ENCODE measurements at regions of chr2 and their contacts with region 1.

Region 1: GRCh38 chr2:63861220-63861822 is 19.6 kb downstream of the UGP2 start:
- DNase-seq: peak in 1 of 2 donors; percentile 86
- ATAC-seq: peak; percentile 54 to 76 (median 74)
- H3K4me3 ChIP-seq: no peak overlapping the region
- H3K4me3 Mint-ChIP-seq: no peak overlapping the region
- H3K27ac ChIP-seq: no peak overlapping the region
- H3K27ac Mint-ChIP-seq: peak overlapping the region; percentile 32 to 68
- H3K4me1 ChIP-seq: peaks cover 10% of the 10 kb centered on the region
- H3K4me1 Mint-ChIP-seq: peaks cover 16 to 27% of the 10 kb centered on the region in 2 donors
- H3K27me3 ChIP-seq: no peaks in the 10 kb centered on the region
- H3K27me3 Mint-ChIP-seq: no peaks in the 10 kb centered on the region
- CTCF ChIP-seq: peak; percentile 52

Region 2: GRCh38 chr2:63692002-63692606 is 169.2 kb before region 1 on chr2:
- intact Hi-C with region 1: loop called (anchors 1 kb)
- DNase-seq: peak in 1 of 2 donors; percentile 70
- ATAC-seq: peak; percentile 44 to 66 (median 63)
- H3K4me3 ChIP-seq: no peak overlapping the region
- H3K4me3 Mint-ChIP-seq: no peak overlapping the region
- H3K27ac ChIP-seq: no peak overlapping the region
- H3K27ac Mint-ChIP-seq: no peak overlapping the region
- H3K4me1 ChIP-seq: no peaks in the 10 kb centered on the region
- H3K4me1 Mint-ChIP-seq: no peaks in the 10 kb centered on the region
- H3K27me3 ChIP-seq: no peaks in the 10 kb centered on the region
- H3K27me3 Mint-ChIP-seq: no peaks in the 10 kb centered on the region
- CTCF ChIP-seq: peak; percentile 77

Region 3: DNA sequence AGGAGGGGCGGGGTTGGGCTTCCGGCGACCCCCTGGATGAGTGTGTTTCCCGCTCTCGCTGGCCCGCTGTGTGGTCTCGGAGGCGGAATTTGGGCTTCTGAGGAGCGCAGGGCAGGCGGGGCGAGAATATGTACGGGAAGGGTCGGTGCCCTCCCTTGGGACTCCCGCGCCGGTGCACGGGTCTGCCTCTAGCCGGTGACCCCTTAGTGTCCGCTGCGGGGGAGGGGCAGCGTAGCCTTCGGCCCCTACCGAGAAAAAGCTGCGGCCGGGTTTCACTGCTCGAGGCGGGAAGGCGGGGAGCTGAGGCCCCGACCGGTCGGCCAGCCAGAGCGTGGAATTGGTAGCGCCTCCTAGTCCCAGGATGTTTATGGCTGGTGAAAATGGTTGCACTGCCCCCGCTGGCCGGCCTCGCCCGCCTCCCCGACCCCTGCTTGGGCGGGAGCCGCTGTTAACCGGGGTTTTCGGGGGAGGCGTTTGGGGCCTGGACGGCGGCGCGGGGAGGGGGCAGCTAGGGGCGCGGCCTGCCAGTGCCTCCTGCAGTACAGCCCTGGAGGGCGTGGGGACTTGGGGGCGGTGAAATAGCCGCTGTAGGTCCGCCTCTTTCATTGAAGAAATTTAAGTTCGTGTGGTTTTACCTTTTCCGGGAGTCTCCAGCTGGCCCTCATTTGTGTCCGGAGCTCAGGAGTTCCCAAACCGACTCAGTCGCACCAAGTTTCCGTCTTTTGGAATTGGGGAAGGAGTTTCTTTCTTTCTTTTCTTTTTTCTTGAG is 19.9 kb before region 1 on chr2 and contains the start of gene UGP2:
- intact Hi-C with region 1: loop called (anchors 1 kb)
- DNase-seq: peak; percentile 85 to 89
- ATAC-seq: peak; percentile 74 to 85 (median 74)
- H3K4me3 ChIP-seq: peak within 1 kb of the TSS; percentile 77
- H3K4me3 Mint-ChIP-seq: peak within 1 kb of the TSS; percentile 97
- H3K27ac ChIP-seq: peak within 1 kb of the TSS; percentile 89
- H3K27ac Mint-ChIP-seq: peak within 1 kb of the TSS; percentile 90 to 97
- H3K4me1 ChIP-seq: peaks cover 12% of the 10 kb centered on the region
- H3K4me1 Mint-ChIP-seq: peaks cover 45 to 59% of the 10 kb centered on the region in 2 donors
- H3K27me3 ChIP-seq: no peaks in the 10 kb centered on the region
- H3K27me3 Mint-ChIP-seq: no peaks in the 10 kb centered on the region
- CTCF ChIP-seq: no peak
- total RNA-seq, gene UGP2: 100 to 117 (median 101) TPM

Region 4: GRCh38 chr2:65483763-65484162 is 1622.4 kb after region 1 on chr2:
- intact Hi-C with region 1: no loop called
- DNase-seq: no peak
- ATAC-seq: no peak
- H3K4me3 ChIP-seq: no peak overlapping the region
- H3K4me3 Mint-ChIP-seq: no peak overlapping the region
- H3K27ac ChIP-seq: no peak overlapping the region
- H3K27ac Mint-ChIP-seq: no peak overlapping the region
- H3K4me1 ChIP-seq: no peaks in the 10 kb centered on the region
- H3K4me1 Mint-ChIP-seq: no peaks in the 10 kb centered on the region
- H3K27me3 ChIP-seq: no peaks in the 10 kb centered on the region
- H3K27me3 Mint-ChIP-seq: peaks cover 13 to 31% of the 10 kb centered on the region in 2 donors
- CTCF ChIP-seq: no peak

Measured in natural killer cell (primary cell).